ENCODE measurements at regions of chr19 and their contacts with region 1.

Region 1: DNA sequence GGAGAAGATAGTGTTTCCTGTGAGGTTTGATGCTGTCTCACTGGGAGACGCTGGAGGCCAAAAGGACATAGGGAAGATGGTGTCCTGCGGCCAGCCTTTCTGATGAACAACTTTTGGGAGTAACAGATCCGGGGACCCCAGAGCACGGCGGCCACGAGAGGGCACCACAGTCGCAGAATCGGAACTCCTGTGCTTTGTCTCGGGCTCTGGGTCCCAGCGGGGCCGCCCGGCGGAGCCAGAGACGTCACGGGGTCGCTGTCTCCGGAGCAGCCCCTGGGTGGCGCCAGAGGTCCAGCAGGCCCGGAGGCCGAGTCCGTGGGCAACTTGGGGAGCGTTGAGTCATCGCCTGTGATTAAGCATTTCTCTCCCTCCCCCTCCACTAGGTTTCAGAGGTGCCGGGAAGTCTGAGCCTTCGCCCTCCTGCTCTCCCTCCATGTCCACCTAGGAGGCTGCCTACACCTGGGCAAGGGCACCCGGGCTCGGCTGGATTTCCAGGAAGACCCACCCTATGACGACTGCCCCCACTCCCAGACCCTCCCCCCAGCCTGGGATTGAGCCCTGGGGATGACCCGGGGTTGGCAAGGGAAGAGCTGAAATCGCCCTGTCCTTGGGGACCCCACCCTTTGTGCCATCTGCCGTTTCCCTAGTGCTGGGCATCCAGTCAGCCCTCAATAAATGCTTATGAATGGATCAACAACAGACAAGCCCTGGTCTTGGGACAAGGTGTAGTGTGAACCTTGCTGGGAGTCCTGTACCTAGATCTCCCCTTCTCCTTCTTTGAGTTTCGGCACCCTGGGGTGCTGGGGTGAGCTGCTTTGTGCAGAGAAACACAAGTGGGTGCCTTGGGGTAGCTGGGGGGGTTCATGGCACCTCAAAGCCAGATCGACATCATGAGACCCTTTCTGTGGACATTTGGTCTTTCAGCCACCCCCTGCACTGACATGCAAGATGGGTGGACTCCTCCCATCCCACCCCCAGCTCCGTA is 3.4 kb downstream of the NANOS3 start:
- DNase-seq: peak; percentile 89 to 99 (median 93)
- ATAC-seq: peak; percentile 99
- H3K4me3 ChIP-seq: peak overlapping the region; percentile 49
- H3K4me3 Mint-ChIP-seq: peak overlapping the region; percentile 49 to 89 (median 66)
- H3K27ac ChIP-seq: peak overlapping the region; percentile 48
- H3K27ac Mint-ChIP-seq: peak overlapping the region in 8 of 9 donors; percentile 12 to 86 (median 70)
- H3K4me1 ChIP-seq: peaks cover 36 to 38% of the 10 kb centered on the region in 2 donors
- H3K4me1 Mint-ChIP-seq: peaks cover 6 to 43% (median 34%) of the 10 kb centered on the region in 7 donors
- H3K27me3 ChIP-seq: no peaks in the 10 kb centered on the region
- H3K27me3 Mint-ChIP-seq: no peaks in the 10 kb centered on the region

Region 2: DNA sequence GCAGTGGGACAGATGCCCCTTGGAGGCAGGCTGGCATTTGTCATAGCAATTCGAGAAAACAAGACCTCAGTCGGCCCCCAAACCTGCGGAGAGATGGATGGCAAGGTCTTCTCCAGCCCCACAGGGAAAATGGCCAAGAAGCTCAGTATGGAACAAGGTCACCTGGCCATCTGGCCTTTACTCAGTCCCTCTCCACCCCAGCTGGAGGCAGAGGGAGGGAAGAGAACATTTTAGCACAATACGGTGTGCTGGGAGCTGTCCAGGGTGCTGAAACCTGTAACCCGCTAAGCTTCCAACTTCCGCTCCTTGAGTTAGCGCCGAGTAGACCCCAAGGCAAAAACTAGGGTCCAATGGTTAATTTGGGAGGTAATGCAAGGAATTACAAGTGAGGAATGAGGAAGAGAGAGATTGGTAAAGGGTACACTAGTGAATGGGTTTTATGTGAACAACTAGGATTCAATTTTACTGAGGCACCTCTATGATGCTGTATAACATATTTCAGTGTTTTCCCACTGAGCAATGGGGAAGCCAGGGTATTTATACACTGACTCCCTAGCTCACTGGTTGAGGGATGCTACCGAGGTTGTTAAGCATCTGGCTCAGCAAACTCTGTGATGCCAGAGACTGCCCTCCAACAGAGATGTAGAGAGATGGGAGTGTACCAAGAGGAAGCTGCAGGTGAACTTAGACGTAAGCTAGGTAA is 438.4 kb before region 1 on chr19:
- CTCF ChIA-PET with region 1: no interaction called
- POLR2A ChIA-PET with region 1: no interaction called
- intact Hi-C with region 1: no loop called
- DNase-seq: peak in 8 of 9 donors; percentile 2 to 46 (median 34)
- ATAC-seq: no peak
- H3K4me3 ChIP-seq: no peak overlapping the region
- H3K4me3 Mint-ChIP-seq: peak overlapping the region in 1 of 10 donors; percentile 36
- H3K27ac ChIP-seq: no peak overlapping the region
- H3K27ac Mint-ChIP-seq: peak overlapping the region in 1 of 9 donors; percentile 48
- H3K4me1 ChIP-seq: no peaks in the 10 kb centered on the region
- H3K4me1 Mint-ChIP-seq: no peaks in the 10 kb centered on the region
- H3K27me3 ChIP-seq: no peaks in the 10 kb centered on the region
- H3K27me3 Mint-ChIP-seq: peaks cover 0 to 42% (median 23%) of the 10 kb centered on the region in 5 donors

Region 3: DNA sequence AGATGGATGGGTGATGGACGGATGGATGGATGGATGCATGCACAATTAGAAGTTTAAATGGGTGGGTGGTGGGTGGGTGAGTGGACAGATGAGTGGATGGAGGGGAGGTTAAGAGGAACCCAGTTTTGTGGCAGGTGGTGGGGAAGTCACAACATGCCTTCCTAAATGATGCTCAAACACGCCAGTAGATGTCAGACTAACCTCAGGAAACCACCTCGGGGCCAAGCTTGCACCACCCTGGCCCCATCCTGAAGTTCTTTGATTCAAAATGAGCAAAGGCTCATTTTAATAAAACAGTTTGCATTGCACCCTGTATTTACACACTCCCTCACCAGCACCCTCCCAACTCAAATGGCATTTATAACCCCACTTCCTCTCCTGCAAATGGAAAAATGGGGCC is 282.7 kb before region 1 on chr19:
- CTCF ChIA-PET with region 1: no interaction called
- POLR2A ChIA-PET with region 1: no interaction called
- intact Hi-C with region 1: loop called in 1 of 2 experiments (anchors 5 kb)
- DNase-seq: peak in 8 of 9 donors; percentile 10 to 54 (median 34)
- ATAC-seq: peak; percentile 73
- H3K4me3 ChIP-seq: no peak overlapping the region
- H3K4me3 Mint-ChIP-seq: no peak overlapping the region
- H3K27ac ChIP-seq: no peak overlapping the region
- H3K27ac Mint-ChIP-seq: no peak overlapping the region
- H3K4me1 ChIP-seq: no peaks in the 10 kb centered on the region
- H3K4me1 Mint-ChIP-seq: peaks cover 0 to 4% (median 0%) of the 10 kb centered on the region in 7 donors
- H3K27me3 ChIP-seq: peaks cover 0 to 4% of the 10 kb centered on the region in 2 donors
- H3K27me3 Mint-ChIP-seq: peaks cover 4 to 32% (median 31%) of the 10 kb centered on the region in 5 donors

Region 4: DNA sequence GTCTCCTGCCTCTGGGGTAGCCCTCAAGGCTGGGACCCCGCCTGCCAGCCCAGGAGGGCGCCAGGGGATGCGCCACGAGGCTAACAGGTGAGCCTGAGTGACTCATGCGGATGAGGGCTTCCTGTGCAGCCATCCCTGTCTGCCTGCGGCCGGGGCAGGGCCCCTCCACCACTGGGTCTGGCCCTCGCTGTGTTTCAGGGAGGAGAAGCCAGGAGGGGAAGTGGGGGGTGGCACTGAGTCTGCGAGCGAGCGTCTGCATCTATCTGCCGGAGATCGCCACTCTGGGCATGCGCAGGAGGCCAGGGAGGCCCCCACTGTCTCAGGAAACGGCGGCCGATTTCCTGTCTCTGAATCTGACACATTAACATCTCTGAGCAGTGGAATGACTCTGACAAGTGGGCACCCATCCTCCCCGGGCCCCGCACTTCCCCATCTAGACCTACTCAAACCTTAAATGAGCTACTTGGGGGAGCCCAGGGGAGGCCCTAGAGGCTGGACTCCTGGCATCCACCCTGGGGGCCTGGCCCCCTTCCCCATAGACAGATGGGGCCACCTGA is 106.1 kb after region 1 on chr19:
- CTCF ChIA-PET with region 1: interaction called, 7 read pairs
- POLR2A ChIA-PET with region 1: interaction called, 3 read pairs
- intact Hi-C with region 1: loop called in 1 of 2 experiments (anchors 1 kb)
- DNase-seq: peak; percentile 94 to 98 (median 97)
- ATAC-seq: peak; percentile 94
- H3K4me3 ChIP-seq: peak overlapping the region; percentile 48
- H3K4me3 Mint-ChIP-seq: peak overlapping the region; percentile 61 to 85 (median 77)
- H3K27ac ChIP-seq: peak overlapping the region; percentile 97
- H3K27ac Mint-ChIP-seq: peak overlapping the region; percentile 92 to 99 (median 96)
- H3K4me1 ChIP-seq: peaks cover 39 to 65% of the 10 kb centered on the region in 2 donors
- H3K4me1 Mint-ChIP-seq: peaks cover 48 to 89% (median 66%) of the 10 kb centered on the region in 7 donors
- H3K27me3 ChIP-seq: no peaks in the 10 kb centered on the region
- H3K27me3 Mint-ChIP-seq: no peaks in the 10 kb centered on the region

Region 5: GRCh38 chr19:14048443-14049153 is 168.2 kb after region 1 on chr19:
- CTCF ChIA-PET with region 1: interaction called, 15 read pairs
- POLR2A ChIA-PET with region 1: interaction called, 4 read pairs
- intact Hi-C with region 1: loop called (anchors 1 kb)
- DNase-seq: peak; percentile 46 to 80 (median 67)
- ATAC-seq: peak; percentile 96
- H3K4me3 ChIP-seq: no peak overlapping the region
- H3K4me3 Mint-ChIP-seq: no peak overlapping the region
- H3K27ac ChIP-seq: peak overlapping the region; percentile 42
- H3K27ac Mint-ChIP-seq: peak overlapping the region in 8 of 9 donors; percentile 21 to 77 (median 61)
- H3K4me1 ChIP-seq: peaks cover 0 to 4% of the 10 kb centered on the region in 2 donors
- H3K4me1 Mint-ChIP-seq: peaks cover 0 to 5% (median 0%) of the 10 kb centered on the region in 7 donors
- H3K27me3 ChIP-seq: no peaks in the 10 kb centered on the region
- H3K27me3 Mint-ChIP-seq: no peaks in the 10 kb centered on the region

Region 6: GRCh38 chr19:14117668-14118164 is 237.4 kb after region 1 on chr19 and contains the start of gene PRKACA:
- CTCF ChIA-PET with region 1: interaction called, 3 read pairs
- POLR2A ChIA-PET with region 1: no interaction called
- intact Hi-C with region 1: loop called (anchors 1 kb)
- DNase-seq: peak; percentile 93 to 99 (median 98)
- ATAC-seq: peak; percentile 93
- H3K4me3 ChIP-seq: peak within 1 kb of the TSS; percentile 67
- H3K4me3 Mint-ChIP-seq: peak within 1 kb of the TSS; percentile 92 to 98 (median 95)
- H3K27ac ChIP-seq: peak within 1 kb of the TSS; percentile 87
- H3K27ac Mint-ChIP-seq: peak within 1 kb of the TSS; percentile 92 to 99 (median 97)
- H3K4me1 ChIP-seq: peaks cover 15 to 46% of the 10 kb centered on the region in 2 donors
- H3K4me1 Mint-ChIP-seq: peaks cover 20 to 56% (median 46%) of the 10 kb centered on the region in 7 donors
- H3K27me3 ChIP-seq: no peaks in the 10 kb centered on the region
- H3K27me3 Mint-ChIP-seq: no peaks in the 10 kb centered on the region
- total RNA-seq, gene PRKACA: 41.3 to 101 (median 63.1) TPM

Region 7: GRCh38 chr19:14479975-14480699 is 599.8 kb after region 1 on chr19:
- CTCF ChIA-PET with region 1: no interaction called
- POLR2A ChIA-PET with region 1: no interaction called
- intact Hi-C with region 1: loop called (anchors 5 to 10 kb)
- DNase-seq: peak; percentile 47 to 87 (median 65)
- ATAC-seq: peak; percentile 67
- H3K4me3 ChIP-seq: no peak overlapping the region
- H3K4me3 Mint-ChIP-seq: no peak overlapping the region
- H3K27ac ChIP-seq: no peak overlapping the region
- H3K27ac Mint-ChIP-seq: no peak overlapping the region
- H3K4me1 ChIP-seq: peaks cover under 1% of the 10 kb centered on the region in 2 donors
- H3K4me1 Mint-ChIP-seq: peaks cover 0 to 17% (median 11%) of the 10 kb centered on the region in 7 donors
- H3K27me3 ChIP-seq: no peaks in the 10 kb centered on the region
- H3K27me3 Mint-ChIP-seq: peaks cover 0 to under 1% (median 0%) of the 10 kb centered on the region in 5 donors